Calu3 (cell line): ENCODE measurements at regions of chr21 and their contacts with region 1.

Region 1: DNA sequence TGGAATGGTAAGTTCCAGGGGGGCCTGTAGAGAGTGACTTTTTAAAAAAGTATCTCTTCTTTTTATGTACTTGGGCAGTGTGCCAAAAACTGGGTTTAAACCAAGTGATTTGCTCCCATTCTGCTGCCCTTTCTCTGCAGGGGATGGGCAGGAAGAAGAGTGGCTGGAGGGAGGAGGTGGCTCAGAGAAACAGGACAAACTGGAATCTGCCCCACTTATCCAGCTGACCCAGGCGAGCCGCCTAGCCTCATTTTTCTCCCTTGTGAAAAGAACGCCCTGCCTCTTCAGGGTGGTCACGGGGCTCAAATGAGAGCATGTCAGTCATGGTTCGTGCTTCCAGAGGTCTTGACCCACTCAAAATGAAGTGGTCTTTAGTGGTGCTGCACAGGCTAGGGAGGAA is 2.5 kb downstream of the SLC37A1 start:
- DNase-seq: peak; percentile 65
- H3K4me3 Mint-ChIP-seq: peak overlapping the region; percentile 0
- H3K27ac Mint-ChIP-seq: no peak overlapping the region
- H3K4me1 Mint-ChIP-seq: peaks cover 34% of the 10 kb centered on the region
- H3K27me3 Mint-ChIP-seq: no peaks in the 10 kb centered on the region
- CTCF ChIP-seq: no peak

Region 2: GRCh38 chr21:42440187-42440792 is 75.8 kb before region 1 on chr21:
- CTCF ChIA-PET with region 1: no interaction called
- intact Hi-C with region 1: no loop called
- DNase-seq: no peak
- H3K4me3 Mint-ChIP-seq: no peak overlapping the region
- H3K27ac Mint-ChIP-seq: no peak overlapping the region
- H3K4me1 Mint-ChIP-seq: peaks cover 2% of the 10 kb centered on the region
- H3K27me3 Mint-ChIP-seq: peaks cover 36% of the 10 kb centered on the region
- CTCF ChIP-seq: no peak

Region 3: GRCh38 chr21:42467140-42467983 is 48.8 kb before region 1 on chr21:
- CTCF ChIA-PET with region 1: interaction called, 3 read pairs
- intact Hi-C with region 1: loop called (anchors 5 kb)
- DNase-seq: peak; percentile 25
- H3K4me3 Mint-ChIP-seq: no peak overlapping the region
- H3K27ac Mint-ChIP-seq: peak overlapping the region; percentile 52
- H3K4me1 Mint-ChIP-seq: peaks cover 71% of the 10 kb centered on the region
- H3K27me3 Mint-ChIP-seq: no peaks in the 10 kb centered on the region
- CTCF ChIP-seq: no peak

Region 4: GRCh38 chr21:42636538-42636930 is 120.4 kb after region 1 on chr21:
- CTCF ChIA-PET with region 1: no interaction called
- intact Hi-C with region 1: no loop called
- DNase-seq: no peak
- H3K4me3 Mint-ChIP-seq: no peak overlapping the region
- H3K27ac Mint-ChIP-seq: no peak overlapping the region
- H3K4me1 Mint-ChIP-seq: peaks cover 8% of the 10 kb centered on the region
- H3K27me3 Mint-ChIP-seq: peaks cover 2% of the 10 kb centered on the region
- CTCF ChIP-seq: no peak

Region 5: DNA sequence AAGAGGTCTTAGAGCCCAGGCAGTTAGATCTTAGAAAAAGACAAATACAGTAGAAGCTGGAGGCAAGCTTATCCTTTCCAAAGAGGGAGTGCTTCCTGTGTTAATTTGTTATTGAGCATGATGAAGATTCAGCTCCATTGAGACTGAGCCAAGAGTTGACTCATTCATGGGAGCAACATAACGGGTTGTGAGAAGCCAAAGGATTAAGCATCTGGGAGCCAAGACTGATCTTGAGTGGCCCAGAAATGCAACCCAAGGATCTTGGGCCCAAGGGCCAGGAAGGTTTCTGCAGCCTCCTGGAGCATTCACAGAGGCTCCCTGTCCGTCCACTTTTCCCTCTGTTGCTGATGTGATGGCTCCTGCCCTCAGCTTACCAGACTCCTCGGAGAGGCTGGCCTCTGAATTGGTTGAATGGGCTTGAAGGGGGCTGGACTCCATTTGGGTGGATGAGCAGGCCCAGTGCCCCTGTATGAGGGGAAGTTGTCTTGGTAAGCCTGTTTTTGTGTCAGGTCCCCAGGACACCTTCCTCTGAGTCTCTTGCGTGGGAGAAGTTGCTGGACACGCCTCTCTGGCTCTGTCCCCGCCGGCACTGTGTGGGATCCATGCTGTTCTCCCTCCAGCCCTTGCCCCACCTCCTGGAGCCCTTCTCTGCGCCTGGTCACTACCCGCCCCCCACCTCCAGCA is 179.7 kb after region 1 on chr21:
- CTCF ChIA-PET with region 1: no interaction called
- intact Hi-C with region 1: no loop called
- DNase-seq: no peak
- H3K4me3 Mint-ChIP-seq: no peak overlapping the region
- H3K27ac Mint-ChIP-seq: no peak overlapping the region
- H3K4me1 Mint-ChIP-seq: no peaks in the 10 kb centered on the region
- H3K27me3 Mint-ChIP-seq: no peaks in the 10 kb centered on the region
- CTCF ChIP-seq: no peak